ENCODE measurements at regions of chr16 and their contacts with region 1.

Region 1: DNA sequence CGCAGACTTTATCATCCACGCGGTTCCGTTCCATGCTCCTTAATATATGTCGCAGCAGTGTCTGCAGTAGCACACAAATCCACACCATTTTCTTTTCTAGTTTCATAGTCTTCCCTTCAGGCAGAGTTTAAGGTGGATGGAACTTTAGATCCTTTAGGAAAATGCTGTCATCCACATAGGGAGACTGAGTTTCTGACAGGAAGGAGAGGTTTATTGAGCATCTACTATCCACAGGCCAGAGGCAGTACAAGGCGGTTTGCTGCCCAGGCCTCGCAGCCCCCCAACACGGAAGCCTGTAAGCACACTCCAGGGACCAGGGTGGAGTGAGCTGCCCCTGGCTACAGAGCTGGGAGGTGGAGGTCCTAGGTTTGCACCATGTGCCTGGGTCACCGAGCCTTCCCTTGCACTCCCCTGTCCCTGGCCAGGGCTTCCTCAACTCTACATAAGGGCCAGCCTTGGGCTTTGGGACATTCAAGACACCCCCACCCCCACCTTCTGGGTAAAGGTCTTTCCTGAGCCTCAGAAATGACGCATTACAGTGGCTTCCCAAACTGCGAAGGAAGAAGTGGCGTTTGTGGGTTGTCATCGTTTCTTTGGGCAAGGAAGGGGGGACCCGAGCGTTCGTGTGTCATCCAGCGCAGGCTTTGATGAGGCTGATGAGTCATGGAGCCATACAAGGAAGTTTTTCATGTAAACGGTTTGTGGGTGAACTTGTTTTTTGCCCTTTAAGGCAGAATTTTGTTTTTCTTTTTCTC is 146.5 kb upstream of the PLCG2 start:
- DNase-seq: peak; percentile 83
- H3K4me3 ChIP-seq: no peak overlapping the region
- H3K27ac ChIP-seq: peak overlapping the region; percentile 73
- H3K4me1 ChIP-seq: peaks cover 25% of the 10 kb centered on the region
- H3K27me3 ChIP-seq: no peaks in the 10 kb centered on the region
- CTCF ChIP-seq: no peak
- POLR2A ChIP-seq: no peak

Region 2: GRCh38 chr16:81616321-81617055 is 16.1 kb before region 1 on chr16:
- CTCF ChIA-PET with region 1: no interaction called
- POLR2A ChIA-PET with region 1: no interaction called
- dilution Hi-C with region 1: no loop called
- intact Hi-C with region 1: loop called (anchors 1 kb)
- DNase-seq: peak; percentile 53
- H3K4me3 ChIP-seq: no peak overlapping the region
- H3K27ac ChIP-seq: no peak overlapping the region
- H3K4me1 ChIP-seq: peaks cover 32% of the 10 kb centered on the region
- H3K27me3 ChIP-seq: no peaks in the 10 kb centered on the region
- CTCF ChIP-seq: no peak
- POLR2A ChIP-seq: no peak

Region 3: DNA sequence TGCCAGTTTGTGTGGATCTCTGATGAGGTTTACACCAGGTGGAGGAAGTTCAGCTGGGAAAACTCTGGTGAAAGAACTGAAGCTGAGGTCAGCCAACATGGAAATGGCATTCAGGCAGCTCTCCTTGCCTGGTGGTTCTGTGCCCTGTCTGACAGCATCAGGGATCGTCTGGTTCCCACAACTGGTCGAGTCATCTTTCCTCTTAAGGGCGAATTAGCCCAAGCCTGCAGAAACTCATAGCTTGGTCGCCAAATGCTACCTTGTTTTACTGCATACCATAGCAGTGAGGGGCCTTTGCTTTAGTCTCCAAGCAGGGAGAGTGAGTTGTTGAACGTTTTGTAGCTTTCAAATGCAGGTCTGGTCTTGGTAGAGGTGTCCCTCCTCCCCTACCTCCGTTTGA is 153.8 kb after region 1 on chr16:
- CTCF ChIA-PET with region 1: no interaction called
- POLR2A ChIA-PET with region 1: no interaction called
- dilution Hi-C with region 1: no loop called
- intact Hi-C with region 1: no loop called
- DNase-seq: peak; percentile 36
- H3K4me3 ChIP-seq: no peak overlapping the region
- H3K27ac ChIP-seq: no peak overlapping the region
- H3K4me1 ChIP-seq: no peaks in the 10 kb centered on the region
- H3K27me3 ChIP-seq: no peaks in the 10 kb centered on the region
- CTCF ChIP-seq: no peak
- POLR2A ChIP-seq: no peak

Measured in endothelial cell of umbilical vein (primary cell).